Activated CD8-positive, alpha-beta T cell treated with anti-CD3 and anti-CD28 coated beads, Interleukin-2, amount 10 ng/mL, durations not matched to agents 7 days and 5 days (primary cell): ENCODE measurements at regions of chr7 and their contacts with region 1.

Region 1: GRCh38 chr7:139620676-139621344 is 97.3 kb downstream of the CLEC2L start:
- DNase-seq: peak; percentile 72
- ATAC-seq: peak; percentile 78
- H3K4me3 Mint-ChIP-seq: no peak overlapping the region
- H3K27ac Mint-ChIP-seq: no peak overlapping the region
- H3K4me1 Mint-ChIP-seq: peaks cover 31% of the 10 kb centered on the region
- H3K27me3 Mint-ChIP-seq: no peaks in the 10 kb centered on the region

Region 2: DNA sequence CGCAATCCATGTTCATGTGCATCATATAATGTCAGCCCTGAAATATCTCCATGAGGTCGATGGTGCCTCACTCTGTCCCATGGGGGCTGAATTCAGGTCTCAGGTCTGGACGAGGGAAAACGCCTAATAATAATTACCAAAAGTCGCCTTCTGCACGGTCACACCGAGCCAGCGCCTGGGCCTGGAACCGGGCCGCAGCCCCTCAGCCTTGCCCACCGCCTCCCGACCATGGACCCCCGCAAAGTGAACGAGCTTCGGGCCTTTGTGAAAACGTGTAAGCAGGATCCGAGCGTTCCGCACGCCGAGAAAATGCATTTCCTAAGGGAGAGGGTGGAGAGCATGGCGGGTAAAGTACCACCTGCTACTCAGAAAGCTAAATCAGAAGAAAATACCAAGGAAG is 118.6 kb before region 1 on chr7:
- CTCF ChIA-PET with region 1: interaction called, 35 read pairs
- POLR2A ChIA-PET with region 1: no interaction called
- DNase-seq: no peak
- ATAC-seq: no peak
- H3K4me3 Mint-ChIP-seq: no peak overlapping the region
- H3K27ac Mint-ChIP-seq: no peak overlapping the region
- H3K4me1 Mint-ChIP-seq: peaks cover 8% of the 10 kb centered on the region
- H3K27me3 Mint-ChIP-seq: peaks cover 5% of the 10 kb centered on the region

Region 3: GRCh38 chr7:139557857-139558581 is 62.8 kb before region 1 on chr7:
- CTCF ChIA-PET with region 1: no interaction called
- POLR2A ChIA-PET with region 1: no interaction called
- DNase-seq: no peak
- ATAC-seq: no peak
- H3K4me3 Mint-ChIP-seq: no peak overlapping the region
- H3K27ac Mint-ChIP-seq: no peak overlapping the region
- H3K4me1 Mint-ChIP-seq: no peaks in the 10 kb centered on the region
- H3K27me3 Mint-ChIP-seq: peaks cover 13% of the 10 kb centered on the region

Region 4: GRCh38 chr7:140003913-140004382 is 383.1 kb after region 1 on chr7:
- CTCF ChIA-PET with region 1: interaction called, 78 read pairs
- POLR2A ChIA-PET with region 1: no interaction called
- DNase-seq: peak; percentile 49
- ATAC-seq: no peak
- H3K4me3 Mint-ChIP-seq: no peak overlapping the region
- H3K27ac Mint-ChIP-seq: no peak overlapping the region
- H3K4me1 Mint-ChIP-seq: no peaks in the 10 kb centered on the region
- H3K27me3 Mint-ChIP-seq: peaks cover 2% of the 10 kb centered on the region